ENCODE measurements at regions of chr1 and their contacts with region 1.

Region 1: GRCh38 chr1:65525266-65526048 is 105.0 kb downstream of the LEPR start:
- DNase-seq: peak; percentile 61 to 75 (median 74)
- ATAC-seq: peak; percentile 70
- H3K4me3 ChIP-seq: peak overlapping the region; percentile 82
- H3K27ac ChIP-seq: peak overlapping the region; percentile 73
- H3K4me1 ChIP-seq: peaks cover 10% of the 10 kb centered on the region in 2 experiments; a peak in 4 of 5 replicates
- H3K27me3 ChIP-seq: no peaks in the 10 kb centered on the region
- CTCF ChIP-seq: no peak
- EP300 ChIP-seq: no peak
- POLR2A ChIP-seq: peak; percentile 52
- RAD21 ChIP-seq: no peak

Region 2: DNA sequence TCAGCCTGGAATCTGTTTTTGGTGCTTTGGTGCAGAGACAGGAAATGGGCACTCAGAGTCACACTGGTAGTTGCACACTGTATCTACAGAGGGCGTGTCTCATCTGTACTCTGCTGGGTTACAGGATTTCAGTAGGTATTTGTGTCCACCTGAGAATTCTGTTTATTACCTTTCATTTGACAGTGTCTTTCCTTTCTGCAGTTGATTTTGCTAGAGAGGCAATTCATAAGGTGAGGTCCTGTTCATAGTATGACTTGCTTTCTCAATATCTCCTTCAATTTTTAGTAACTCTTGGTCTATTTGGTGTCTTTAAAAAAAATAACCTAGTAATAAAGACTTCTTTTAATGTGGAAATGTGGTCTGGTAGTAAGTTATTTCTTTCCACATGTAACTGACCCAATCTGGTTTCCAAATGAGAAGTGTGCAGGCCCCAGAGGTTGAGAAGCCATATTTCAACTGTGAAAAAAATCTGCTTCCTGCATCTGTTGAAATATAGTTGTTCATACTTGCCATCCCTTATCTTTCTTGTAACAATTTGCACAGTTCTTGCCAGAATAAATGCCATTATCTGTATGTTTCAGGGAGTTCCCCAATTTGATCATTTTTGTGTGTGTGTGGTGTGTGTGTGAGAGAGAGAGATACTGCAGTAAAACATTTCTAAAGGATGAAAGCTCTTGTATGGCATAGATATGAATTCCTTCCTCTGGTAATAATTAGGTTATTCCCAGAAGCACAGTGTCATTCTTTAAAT is 294.6 kb before region 1 on chr1:
- CTCF ChIA-PET with region 1: no interaction called
- POLR2A ChIA-PET with region 1: no interaction called
- in situ Hi-C with region 1: no loop called
- intact Hi-C with region 1: loop called (anchors 2 kb)
- DNase-seq: peak; percentile 34 to 88 (median 46)
- ATAC-seq: peak; percentile 61
- H3K4me3 ChIP-seq: no peak overlapping the region
- H3K27ac ChIP-seq: peak overlapping the region; percentile 86
- H3K4me1 ChIP-seq: peaks cover 40 to 66% of the 10 kb centered on the region in 2 experiments
- H3K27me3 ChIP-seq: no peaks in the 10 kb centered on the region
- CTCF ChIP-seq: peak in 2 of 3 experiments; percentile 18 to 22; a peak in 1 of 6 replicates
- EP300 ChIP-seq: peak; percentile 98
- POLR2A ChIP-seq: no peak
- RAD21 ChIP-seq: peak; percentile 5; a peak in 1 of 4 replicates

Region 3: GRCh38 chr1:65431111-65431705 is 94.2 kb before region 1 on chr1:
- CTCF ChIA-PET with region 1: no interaction called
- POLR2A ChIA-PET with region 1: no interaction called
- in situ Hi-C with region 1: no loop called
- intact Hi-C with region 1: loop called (anchors 5 kb)
- DNase-seq: peak; percentile 31 to 65 (median 40)
- ATAC-seq: peak; percentile 63
- H3K4me3 ChIP-seq: no peak overlapping the region
- H3K27ac ChIP-seq: no peak overlapping the region
- H3K4me1 ChIP-seq: peaks cover 0 to 6% of the 10 kb centered on the region in 2 experiments; a peak in 3 of 5 replicates
- H3K27me3 ChIP-seq: no peaks in the 10 kb centered on the region
- CTCF ChIP-seq: peak; percentile 43 to 70 (median 50); a peak in 4 of 6 replicates
- EP300 ChIP-seq: no peak
- POLR2A ChIP-seq: no peak
- RAD21 ChIP-seq: peak; percentile 74 to 84

Region 4: GRCh38 chr1:65478379-65479026 is 47.0 kb before region 1 on chr1:
- CTCF ChIA-PET with region 1: no interaction called
- POLR2A ChIA-PET with region 1: no interaction called
- in situ Hi-C with region 1: no loop called
- intact Hi-C with region 1: loop called (anchors 2 kb)
- DNase-seq: no peak
- ATAC-seq: 0 out of 3 replicates have a peak, but pooled peaks have one; percentile 2
- H3K4me3 ChIP-seq: peak overlapping the region; percentile 57
- H3K27ac ChIP-seq: peak overlapping the region; percentile 77
- H3K4me1 ChIP-seq: peaks cover 7 to 21% of the 10 kb centered on the region in 2 experiments; a peak in 3 of 5 replicates
- H3K27me3 ChIP-seq: no peaks in the 10 kb centered on the region
- CTCF ChIP-seq: no peak
- EP300 ChIP-seq: no peak
- POLR2A ChIP-seq: 0 out of 2 replicates have a peak, but pooled peaks have one; percentile 23
- RAD21 ChIP-seq: no peak

Region 5: GRCh38 chr1:65539266-65540131 is 14.0 kb after region 1 on chr1:
- CTCF ChIA-PET with region 1: no interaction called
- POLR2A ChIA-PET with region 1: interaction called, 3 read pairs
- in situ Hi-C with region 1: no loop called
- intact Hi-C with region 1: loop called (anchors 1 kb)
- DNase-seq: peak in 1 of 4 experiments; percentile 52
- ATAC-seq: peak; percentile 74
- H3K4me3 ChIP-seq: no peak overlapping the region
- H3K27ac ChIP-seq: peak overlapping the region; percentile 82
- H3K4me1 ChIP-seq: peaks cover 10 to 27% of the 10 kb centered on the region in 2 experiments
- H3K27me3 ChIP-seq: no peaks in the 10 kb centered on the region
- CTCF ChIP-seq: no peak
- EP300 ChIP-seq: no peak
- POLR2A ChIP-seq: no peak
- RAD21 ChIP-seq: no peak